ENCODE measurements at regions of chr17 and their contacts with region 1.

Region 1: GRCh38 chr17:42997984-42998938 is at the start of gene RPL27:
- DNase-seq: peak; percentile 98
- H3K4me3 ChIP-seq: peak within 1 kb of the TSS; percentile 74
- H3K27ac ChIP-seq: peak within 1 kb of the TSS; percentile 77
- H3K4me1 ChIP-seq: peaks cover 18% of the 10 kb centered on the region
- H3K27me3 ChIP-seq: no peaks in the 10 kb centered on the region
- CTCF ChIP-seq: peak; percentile 90
- total RNA-seq, gene RPL27: 707 to 851 TPM

Region 2: GRCh38 chr17:42832974-42833766 is 165.1 kb before region 1 on chr17 and contains the start of gene PSME3:
- intact Hi-C with region 1: loop called (anchors 5 kb)
- DNase-seq: peak; percentile 95
- H3K4me3 ChIP-seq: peak within 1 kb of the TSS; percentile 97
- H3K27ac ChIP-seq: peak within 1 kb of the TSS; percentile 74
- H3K4me1 ChIP-seq: peaks cover 7% of the 10 kb centered on the region
- H3K27me3 ChIP-seq: no peaks in the 10 kb centered on the region
- CTCF ChIP-seq: no peak
- total RNA-seq, gene PSME3: 86.4 to 163 TPM

Measured in colonic mucosa (tissue), 4 donors.